Activated T-helper 1 cell treated with anti-CD3 and anti-CD28 coated beads, Interleukin-12 subunit alpha, Interleukin-12 subunit beta, Interleukin-2, Interleukin-4 antibody, amounts not matched to agents 30 ng/mL and 10 ng/mL and 1 ng/mL, durations not matched to agents 14 hours and 24 hours and 36 hours (primary cell): ENCODE measurements at regions of chr20 and their contacts with region 1.

Region 1: GRCh38 chr20:34704177-34705007 is at the start of gene TP53INP2:
- DNase-seq: peak; percentile 86
- H3K4me3 Mint-ChIP-seq: peak within 1 kb of the TSS; percentile 94
- H3K27ac Mint-ChIP-seq: peak within 1 kb of the TSS; percentile 89
- H3K4me1 Mint-ChIP-seq: peaks cover 52% of the 10 kb centered on the region
- H3K27me3 Mint-ChIP-seq: peaks cover 21% of the 10 kb centered on the region
- total RNA-seq, gene TP53INP2: 3.2 and 3.5 TPM in 2 replicates

Region 2: GRCh38 chr20:34285450-34285849 is 418.9 kb before region 1 on chr20:
- intact Hi-C with region 1: no loop called
- DNase-seq: no peak
- H3K4me3 Mint-ChIP-seq: no peak overlapping the region
- H3K27ac Mint-ChIP-seq: no peak overlapping the region
- H3K4me1 Mint-ChIP-seq: no peaks in the 10 kb centered on the region
- H3K27me3 Mint-ChIP-seq: no peaks in the 10 kb centered on the region

Region 3: GRCh38 chr20:34363062-34363464 is 341.3 kb before region 1 on chr20 and contains the start of gene ITCH:
- intact Hi-C with region 1: loop called (anchors 5 kb)
- DNase-seq: peak; percentile 91
- H3K4me3 Mint-ChIP-seq: peak within 1 kb of the TSS; percentile 100
- H3K27ac Mint-ChIP-seq: peak within 1 kb of the TSS; percentile 100
- H3K4me1 Mint-ChIP-seq: peaks cover 26% of the 10 kb centered on the region
- H3K27me3 Mint-ChIP-seq: no peaks in the 10 kb centered on the region
- total RNA-seq, gene ITCH: 55.6 and 66.4 TPM in 2 replicates

Region 4: GRCh38 chr20:34558320-34559218 is 145.8 kb before region 1 on chr20 and contains the start of gene MAP1LC3A:
- intact Hi-C with region 1: loop called (anchors 1 kb)
- DNase-seq: peak; percentile 92
- H3K4me3 Mint-ChIP-seq: peak within 1 kb of the TSS; percentile 83
- H3K27ac Mint-ChIP-seq: peak within 1 kb of the TSS; percentile 78
- H3K4me1 Mint-ChIP-seq: peaks cover 12% of the 10 kb centered on the region
- H3K27me3 Mint-ChIP-seq: no peaks in the 10 kb centered on the region
- total RNA-seq, gene MAP1LC3A: 6.1 and 7.3 TPM in 2 replicates

Region 5: DNA sequence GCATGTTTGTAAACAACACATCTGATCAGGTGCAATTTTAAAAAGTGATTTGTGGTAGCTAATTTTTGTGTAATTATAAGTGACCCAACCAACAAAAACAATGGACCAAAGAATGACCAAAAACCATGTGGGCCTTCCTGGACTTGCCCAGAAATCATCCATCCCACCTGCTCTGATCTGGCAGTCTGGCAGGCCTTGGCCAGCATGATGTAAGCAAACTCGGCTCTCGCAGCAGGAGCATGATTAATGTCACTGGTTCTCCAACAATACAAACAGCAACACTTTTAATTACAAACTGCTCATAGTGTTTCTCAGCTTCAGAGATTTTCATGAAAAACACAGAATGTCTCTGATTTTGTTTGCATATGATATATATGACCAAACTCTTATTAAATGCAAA is 15.9 kb after region 1 on chr20:
- intact Hi-C with region 1: loop called (anchors 1 kb)
- DNase-seq: no peak
- H3K4me3 Mint-ChIP-seq: no peak overlapping the region
- H3K27ac Mint-ChIP-seq: no peak overlapping the region
- H3K4me1 Mint-ChIP-seq: peaks cover 34% of the 10 kb centered on the region
- H3K27me3 Mint-ChIP-seq: no peaks in the 10 kb centered on the region

Region 6: DNA sequence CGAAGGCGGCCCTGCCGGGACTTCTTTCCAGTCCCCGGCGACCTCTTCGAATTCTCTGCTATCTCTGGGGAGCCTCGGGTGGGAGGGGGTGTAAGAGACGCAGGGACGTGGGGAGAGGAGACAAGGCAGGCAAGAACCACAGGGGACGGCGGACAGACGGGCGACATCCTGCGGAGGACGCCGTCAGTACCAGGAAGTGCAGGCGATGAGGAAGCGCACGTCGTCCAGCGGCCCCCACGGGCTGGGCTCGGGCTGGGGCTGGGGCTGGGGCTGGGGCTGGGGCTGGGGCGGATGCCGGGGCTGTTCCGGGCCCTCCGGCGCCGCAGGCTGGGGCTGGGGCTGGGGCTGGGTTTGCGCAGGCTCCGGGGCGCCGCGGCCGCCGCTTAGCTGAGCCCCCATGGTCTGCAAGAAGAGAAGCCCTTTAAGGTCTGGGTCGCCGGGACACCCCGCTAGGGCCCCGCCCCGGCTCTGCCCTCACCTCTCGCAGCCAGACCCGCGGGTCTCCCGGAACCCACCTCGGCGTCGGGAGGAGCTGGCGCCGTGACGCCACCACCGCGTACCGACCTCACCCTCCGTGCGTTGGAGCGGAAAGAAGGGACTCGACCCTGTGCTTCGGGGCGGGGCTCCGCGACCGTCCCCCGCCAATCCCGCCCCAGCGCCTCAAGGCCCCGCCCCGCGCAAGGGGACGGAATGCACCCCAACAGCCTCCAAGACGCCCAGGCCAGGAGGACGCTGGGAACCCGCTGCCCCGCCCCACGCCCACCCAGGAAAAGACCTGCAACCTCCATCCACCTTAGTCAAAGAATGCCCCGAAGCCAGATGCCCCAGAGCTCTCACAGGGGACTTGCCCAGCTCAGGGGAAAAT is 573.4 kb after region 1 on chr20 and contains the start of gene MMP24OS:
- intact Hi-C with region 1: loop called (anchors 10 kb)
- DNase-seq: peak; percentile 88
- H3K4me3 Mint-ChIP-seq: peak within 1 kb of the TSS; percentile 98
- H3K27ac Mint-ChIP-seq: peak within 1 kb of the TSS; percentile 99
- H3K4me1 Mint-ChIP-seq: peaks cover 18% of the 10 kb centered on the region
- H3K27me3 Mint-ChIP-seq: no peaks in the 10 kb centered on the region
- total RNA-seq, gene MMP24OS: 25.0 and 27.0 TPM in 2 replicates